ENCODE measurements at regions of chr2 and their contacts with region 1.

Region 1: DNA sequence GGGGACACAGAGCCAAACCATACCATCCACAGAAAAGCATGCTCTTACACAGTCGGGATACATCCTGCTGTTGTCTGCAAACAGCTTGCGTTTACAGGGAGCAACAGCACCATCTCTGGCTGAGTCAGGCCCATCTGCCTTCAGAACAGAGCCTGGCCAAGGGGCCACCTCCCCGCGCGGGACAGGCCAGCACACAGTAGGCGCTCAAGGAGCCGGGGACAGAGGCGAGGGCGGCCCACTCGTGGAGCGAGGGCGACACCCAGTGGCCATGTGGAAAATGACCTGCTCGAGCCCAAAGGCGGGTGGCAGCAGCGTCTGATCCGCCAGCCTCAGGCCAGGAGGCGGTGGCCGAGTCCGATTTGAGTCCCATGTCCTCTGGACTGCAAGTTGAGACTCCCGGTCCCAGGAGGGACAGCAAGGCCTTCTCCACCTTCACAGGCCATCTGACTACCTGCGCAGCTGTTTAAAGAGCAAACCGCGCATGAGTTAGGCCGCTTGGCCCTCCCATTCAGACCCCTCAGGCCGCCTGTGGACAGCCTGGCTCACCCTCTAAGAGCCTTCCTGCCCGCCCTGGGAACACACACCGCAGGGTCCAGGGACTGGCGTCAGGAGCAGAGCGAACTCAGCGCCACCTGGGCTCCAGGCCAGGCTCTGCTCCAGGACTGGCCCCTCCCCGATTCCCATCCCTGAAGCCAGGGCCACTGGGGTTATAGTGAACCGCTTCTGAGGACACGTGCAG is 38.3 kb downstream of the TTC32 start:
- DNase-seq: no peak
- H3K4me3 ChIP-seq: no peak overlapping the region; the same call in 1 of the 2 replicates
- CTCF ChIP-seq: peak; percentile 84

Region 2: GRCh38 chr2:18387441-18388206 is 1475.8 kb before region 1 on chr2:
- CTCF ChIA-PET with region 1: interaction called, 10 read pairs
- POLR2A ChIA-PET with region 1: no interaction called
- DNase-seq: no peak
- H3K4me3 ChIP-seq: no peak overlapping the region
- CTCF ChIP-seq: peak; percentile 91

Region 3: DNA sequence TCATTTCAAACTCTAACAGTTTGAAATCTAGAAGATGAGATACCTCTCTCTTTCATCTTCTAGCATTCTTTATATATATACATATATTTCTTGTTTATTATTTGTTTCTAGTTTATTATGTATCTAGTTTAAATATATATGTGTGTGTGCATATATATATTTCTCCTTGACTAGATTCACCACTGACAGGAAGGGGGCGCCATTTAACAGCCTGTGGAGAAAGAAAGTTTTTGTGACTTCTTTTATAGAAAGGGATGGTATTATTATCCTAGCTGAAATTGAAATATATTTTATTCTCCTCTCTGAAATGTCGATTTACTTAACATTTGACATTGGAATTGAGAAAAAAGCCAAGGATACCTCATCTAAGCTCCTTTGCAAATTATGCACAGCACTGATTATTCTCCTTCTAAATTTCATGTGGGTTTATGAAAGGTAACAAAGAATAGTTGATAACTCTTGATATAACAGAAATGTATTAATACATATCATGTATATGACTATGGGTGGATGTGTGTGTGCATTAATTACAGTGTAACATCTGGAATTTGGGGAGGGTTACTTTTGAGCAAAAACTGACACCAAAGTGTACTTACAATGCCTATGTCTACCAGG is 1113.5 kb before region 1 on chr2:
- CTCF ChIA-PET with region 1: interaction called, 14 read pairs
- POLR2A ChIA-PET with region 1: no interaction called
- DNase-seq: no peak
- H3K4me3 ChIP-seq: no peak overlapping the region
- CTCF ChIP-seq: peak; percentile 59

Region 4: DNA sequence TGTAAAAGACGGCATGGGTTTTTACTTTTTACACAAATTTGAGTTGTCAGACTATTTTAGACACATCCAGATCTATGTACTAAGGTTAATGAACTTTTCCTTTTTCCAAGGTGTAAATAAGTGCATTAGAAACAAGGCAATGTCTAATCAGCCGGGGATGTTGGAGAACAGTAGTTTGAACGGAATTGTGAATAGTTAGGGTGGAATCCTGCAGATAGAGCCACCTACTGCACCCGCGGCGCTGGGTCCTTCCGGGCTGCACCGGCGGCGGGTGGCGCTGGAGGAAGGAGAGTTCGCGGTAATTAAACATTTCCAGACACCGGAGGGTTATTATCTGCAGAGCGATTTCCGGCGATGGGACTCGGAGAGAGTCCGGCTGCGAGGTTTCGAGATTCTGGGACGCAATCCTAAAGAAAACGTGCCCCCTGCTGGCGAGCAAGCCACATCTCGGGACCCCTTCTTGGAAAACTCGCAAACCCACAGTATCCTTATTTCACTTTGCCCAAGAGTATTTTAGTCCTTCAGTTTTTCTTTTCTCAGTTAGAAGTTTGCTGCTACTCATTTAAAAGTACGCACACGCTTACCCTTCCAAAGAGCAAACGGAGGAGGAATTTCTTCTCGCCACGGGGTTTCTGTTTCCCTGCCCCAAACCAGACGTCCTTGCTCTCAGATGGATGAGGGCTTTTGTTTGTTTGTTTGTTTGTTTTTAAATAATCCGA is 500.6 kb before region 1 on chr2:
- CTCF ChIA-PET with region 1: interaction called, 82 read pairs
- POLR2A ChIA-PET with region 1: no interaction called
- DNase-seq: no peak
- H3K4me3 ChIP-seq: peak overlapping the region; percentile 73
- CTCF ChIP-seq: peak; percentile 77

Region 5: DNA sequence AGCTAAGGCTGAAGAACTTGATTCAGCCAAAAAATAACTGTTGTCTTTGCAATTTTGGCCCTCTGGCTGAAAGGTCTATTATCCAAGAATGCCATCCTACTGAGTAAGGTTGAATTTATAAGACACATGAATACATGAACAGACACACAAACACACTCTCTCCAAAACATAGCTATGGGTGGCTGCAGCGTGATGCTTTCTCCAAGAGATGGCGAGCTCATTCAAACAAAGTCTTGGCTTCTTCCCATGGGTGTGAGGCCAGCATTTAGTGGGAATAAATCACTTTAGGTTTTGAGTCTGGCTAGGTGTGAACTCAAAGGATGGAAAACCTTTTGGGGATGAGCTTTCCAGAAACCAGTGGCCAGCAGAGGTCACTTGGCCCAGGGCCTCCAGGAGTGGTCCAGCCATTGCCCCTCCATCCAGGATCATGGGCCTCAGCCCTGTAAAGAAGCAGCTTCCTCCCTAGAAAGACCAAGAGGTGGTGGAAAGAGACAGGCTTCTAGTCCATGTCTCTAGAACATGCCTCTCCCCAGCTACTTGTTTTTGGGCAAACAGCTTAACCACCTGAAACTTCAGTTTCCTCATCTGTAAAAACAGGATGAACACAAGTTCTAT is 494.0 kb before region 1 on chr2:
- CTCF ChIA-PET with region 1: interaction called, 82 read pairs
- POLR2A ChIA-PET with region 1: no interaction called
- DNase-seq: no peak
- H3K4me3 ChIP-seq: no peak overlapping the region
- CTCF ChIP-seq: peak; percentile 68

Region 6: GRCh38 chr2:19667085-19667484 is 196.4 kb before region 1 on chr2:
- CTCF ChIA-PET with region 1: interaction called, 16 read pairs
- POLR2A ChIA-PET with region 1: no interaction called
- DNase-seq: no peak
- H3K4me3 ChIP-seq: no peak overlapping the region
- CTCF ChIP-seq: peak; percentile 38

Region 7: GRCh38 chr2:19876751-19877150 is 13.3 kb after region 1 on chr2:
- CTCF ChIA-PET with region 1: interaction called, 24 read pairs
- POLR2A ChIA-PET with region 1: no interaction called
- DNase-seq: no peak
- H3K4me3 ChIP-seq: no peak overlapping the region
- CTCF ChIP-seq: no peak

Region 8: DNA sequence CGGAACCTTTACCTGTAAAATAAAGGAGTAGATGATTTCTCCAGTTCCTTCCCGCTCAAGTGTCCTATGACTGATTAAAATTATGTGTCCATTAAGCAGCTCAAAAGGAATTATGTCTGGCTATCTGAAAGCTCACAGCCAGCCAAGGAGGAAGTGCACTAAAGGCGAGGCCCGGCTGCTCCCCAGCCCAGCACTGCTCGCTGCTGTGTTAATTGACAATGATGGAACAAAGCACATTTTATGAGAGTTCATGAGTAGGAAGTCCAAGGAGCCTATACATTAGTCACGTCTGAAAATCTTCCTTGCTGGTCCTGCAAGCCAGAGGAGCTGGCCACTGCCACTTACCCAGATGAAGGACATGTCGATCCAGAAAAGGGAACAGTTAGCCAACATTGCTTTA is 24.0 kb after region 1 on chr2:
- CTCF ChIA-PET with region 1: no interaction called
- POLR2A ChIA-PET with region 1: no interaction called
- DNase-seq: no peak
- H3K4me3 ChIP-seq: no peak overlapping the region
- CTCF ChIP-seq: no peak

Measured in AG04449 (cell line).